ENCODE measurements at regions of chr1 and their contacts with region 1.

Region 1: DNA sequence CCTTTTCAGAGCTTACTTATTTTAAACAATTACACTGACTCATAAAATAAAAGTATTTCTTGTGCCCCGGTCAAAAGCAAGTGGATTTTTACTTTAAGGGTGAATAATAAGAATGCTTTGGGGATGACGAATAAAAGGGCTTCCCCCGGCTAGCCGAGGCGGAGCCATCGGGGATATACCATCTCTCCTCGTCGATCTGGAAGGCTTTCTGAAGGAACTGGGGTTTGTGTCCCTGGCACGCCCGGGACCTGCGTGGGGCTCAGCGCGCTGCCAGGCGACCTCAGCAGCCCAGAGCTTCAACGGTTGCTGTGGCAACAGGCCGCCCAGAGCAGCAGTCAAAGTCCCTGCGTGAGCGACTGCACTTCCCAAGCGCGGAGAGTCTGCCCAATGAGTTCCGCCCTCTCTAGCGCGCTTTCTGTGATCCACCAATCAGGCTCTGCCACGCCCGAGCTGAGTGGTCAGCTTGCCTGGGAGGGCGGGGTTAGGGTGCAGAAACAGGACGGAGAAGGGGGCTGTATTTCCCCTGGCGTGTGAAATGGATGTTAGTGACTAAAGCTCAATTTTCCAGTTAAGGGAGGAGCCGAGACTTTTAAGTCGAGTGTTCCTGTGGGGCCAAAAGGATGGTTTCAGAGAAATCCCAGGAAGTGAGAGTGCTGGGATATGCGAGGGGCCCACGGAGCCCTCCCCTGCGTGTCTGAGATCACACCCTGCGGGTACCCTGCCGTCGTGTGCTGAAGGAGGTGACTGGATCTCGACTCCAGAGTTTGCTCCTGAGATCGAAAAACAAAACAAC is 33.0 kb upstream of the MGST3 start:
- DNase-seq: peak; percentile 98
- H3K4me3 Mint-ChIP-seq: peak overlapping the region; percentile 91
- H3K27ac Mint-ChIP-seq: peak overlapping the region; percentile 84
- H3K4me1 Mint-ChIP-seq: peaks cover 33% of the 10 kb centered on the region
- H3K27me3 Mint-ChIP-seq: peaks cover 20% of the 10 kb centered on the region

Region 2: DNA sequence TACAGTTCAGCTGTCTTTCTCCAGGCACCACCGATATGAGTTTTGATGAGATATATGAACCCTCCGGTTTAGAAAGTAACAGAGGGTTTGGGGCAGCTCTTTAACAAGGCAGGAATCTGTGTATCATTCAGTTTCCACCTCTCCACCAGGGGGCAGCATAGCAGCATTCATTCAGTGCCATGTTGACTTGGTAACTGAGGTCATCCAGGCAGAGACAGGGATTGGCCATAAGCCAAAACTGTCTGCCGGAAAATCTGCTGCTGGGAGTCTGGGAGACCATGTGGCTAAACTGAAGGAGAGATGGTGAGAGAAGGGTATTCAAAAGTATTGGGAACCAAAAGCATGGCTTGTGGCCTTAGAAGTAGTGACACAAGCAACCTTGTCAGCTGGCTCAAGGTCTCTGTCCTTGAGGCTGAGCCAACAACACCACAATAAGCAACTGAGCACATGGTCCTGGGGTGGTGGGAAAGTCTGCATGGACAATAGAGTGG is 340.1 kb before region 1 on chr1:
- CTCF ChIA-PET with region 1: interaction called, 4 read pairs
- POLR2A ChIA-PET with region 1: no interaction called
- intact Hi-C with region 1: loop called (anchors 10 kb)
- DNase-seq: peak; percentile 53
- H3K4me3 Mint-ChIP-seq: no peak overlapping the region
- H3K27ac Mint-ChIP-seq: no peak overlapping the region
- H3K4me1 Mint-ChIP-seq: no peaks in the 10 kb centered on the region
- H3K27me3 Mint-ChIP-seq: peaks cover 5% of the 10 kb centered on the region

Region 3: DNA sequence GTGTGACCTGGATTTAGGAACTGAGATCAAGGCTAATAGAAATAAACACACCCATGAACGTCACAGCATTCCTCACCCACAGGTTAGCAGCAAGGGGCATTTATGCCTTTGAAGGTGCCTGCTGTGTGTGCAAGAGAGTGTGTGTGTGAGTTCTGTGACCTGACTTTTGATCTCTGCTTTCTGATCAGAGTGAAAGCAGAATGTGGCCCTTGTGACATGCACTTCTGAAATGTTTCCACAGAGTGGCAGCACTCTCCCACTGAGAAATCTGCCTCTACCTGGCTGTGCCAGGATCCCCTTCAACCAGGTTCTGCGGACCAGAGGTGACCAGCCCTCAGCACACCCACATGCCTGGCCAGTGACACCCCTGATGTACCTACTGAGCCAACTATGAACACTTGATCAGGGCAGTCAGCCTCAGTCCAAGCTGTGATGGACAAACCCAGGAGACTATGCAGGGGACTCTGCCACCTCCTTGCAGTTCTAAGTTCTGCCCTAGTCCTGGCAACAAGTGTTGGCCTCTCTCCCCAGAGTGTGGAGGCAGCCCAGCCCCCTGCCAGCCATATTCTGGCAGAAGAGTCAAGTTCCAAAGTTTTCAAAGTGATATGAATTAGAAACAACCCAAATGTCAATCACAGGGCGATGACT is 194.1 kb before region 1 on chr1:
- CTCF ChIA-PET with region 1: interaction called, 312 read pairs
- POLR2A ChIA-PET with region 1: interaction called, 3 read pairs
- intact Hi-C with region 1: loop called (anchors 1 kb)
- DNase-seq: peak; percentile 49
- H3K4me3 Mint-ChIP-seq: no peak overlapping the region
- H3K27ac Mint-ChIP-seq: no peak overlapping the region
- H3K4me1 Mint-ChIP-seq: no peaks in the 10 kb centered on the region
- H3K27me3 Mint-ChIP-seq: peaks cover 18% of the 10 kb centered on the region

Region 4: GRCh38 chr1:165686121-165686970 is 88.3 kb after region 1 on chr1:
- CTCF ChIA-PET with region 1: interaction called, 10 read pairs
- POLR2A ChIA-PET with region 1: no interaction called
- intact Hi-C with region 1: no loop called
- DNase-seq: no peak
- H3K4me3 Mint-ChIP-seq: no peak overlapping the region
- H3K27ac Mint-ChIP-seq: peak overlapping the region; percentile 71
- H3K4me1 Mint-ChIP-seq: peaks cover 41% of the 10 kb centered on the region
- H3K27me3 Mint-ChIP-seq: no peaks in the 10 kb centered on the region

Region 5: DNA sequence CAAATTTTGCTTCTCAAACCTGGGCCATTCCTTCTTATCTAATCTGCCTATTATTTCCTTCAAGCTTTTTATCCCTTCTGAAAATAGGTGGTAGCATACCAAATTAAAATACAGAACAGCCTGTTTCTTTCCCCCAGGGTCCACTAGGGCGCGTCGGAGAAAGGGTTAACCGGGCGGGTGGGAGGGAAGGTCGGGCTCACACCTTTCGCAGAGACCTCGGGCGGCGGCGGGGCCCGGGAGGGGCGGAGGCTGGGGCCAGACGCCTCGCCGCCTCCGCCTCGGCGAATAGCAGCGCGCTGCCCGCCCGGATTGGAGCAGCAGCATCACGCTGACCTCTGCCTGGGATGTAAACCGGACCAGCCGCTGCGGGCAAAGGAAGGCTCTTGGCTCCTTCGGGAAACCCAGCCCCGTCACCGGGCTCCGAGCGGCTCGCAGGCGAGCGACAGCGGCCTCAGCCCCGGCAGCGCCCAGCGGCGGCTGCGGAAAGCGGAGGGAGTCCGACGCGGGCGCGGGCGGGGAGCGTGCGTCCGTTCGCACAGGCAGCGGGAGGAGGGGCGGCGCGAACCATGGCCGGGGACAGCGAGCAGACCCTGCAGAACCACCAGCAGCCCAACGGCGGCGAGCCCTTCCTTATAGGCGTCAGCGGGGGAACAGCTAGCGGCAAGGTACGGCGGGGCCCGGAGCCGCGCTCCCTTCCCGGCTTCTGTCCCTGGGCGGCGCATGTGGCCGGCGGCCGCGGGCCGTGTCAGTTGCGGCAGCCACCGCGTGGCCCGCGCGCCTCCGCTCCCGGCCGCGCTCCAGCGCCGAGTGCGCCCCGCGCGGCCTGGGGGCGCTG is 229.4 kb after region 1 on chr1 and contains the start of gene UCK2:
- CTCF ChIA-PET with region 1: interaction called, 5 read pairs
- POLR2A ChIA-PET with region 1: interaction called, 3 read pairs
- intact Hi-C with region 1: loop called (anchors 1 kb)
- DNase-seq: peak; percentile 75
- H3K4me3 Mint-ChIP-seq: peak within 1 kb of the TSS; percentile 91
- H3K27ac Mint-ChIP-seq: peak within 1 kb of the TSS; percentile 88
- H3K4me1 Mint-ChIP-seq: peaks cover 9% of the 10 kb centered on the region
- H3K27me3 Mint-ChIP-seq: no peaks in the 10 kb centered on the region
- total RNA-seq, gene UCK2: 60.1 to 61.8 TPM

Region 6: GRCh38 chr1:166089804-166090203 is 491.7 kb after region 1 on chr1:
- CTCF ChIA-PET with region 1: no interaction called
- POLR2A ChIA-PET with region 1: no interaction called
- intact Hi-C with region 1: loop called (anchors 10 kb)
- DNase-seq: no peak
- H3K4me3 Mint-ChIP-seq: no peak overlapping the region
- H3K27ac Mint-ChIP-seq: no peak overlapping the region
- H3K4me1 Mint-ChIP-seq: peaks cover 14% of the 10 kb centered on the region
- H3K27me3 Mint-ChIP-seq: no peaks in the 10 kb centered on the region